ENCODE measurements at regions of chr5 and their contacts with region 1.

Region 1: GRCh38 chr5:71905834-71906711 is 187.0 kb downstream of the CARTPT start:
- DNase-seq: no peak
- ATAC-seq: no peak
- H3K4me3 ChIP-seq: no peak overlapping the region
- H3K27ac ChIP-seq: no peak overlapping the region
- H3K4me1 ChIP-seq: no peaks in the 10 kb centered on the region
- H3K27me3 ChIP-seq: no peaks in the 10 kb centered on the region
- CTCF ChIP-seq: no peak

Region 2: GRCh38 chr5:71790433-71790832 is 115.6 kb before region 1 on chr5:
- intact Hi-C with region 1: no loop called
- DNase-seq: no peak
- ATAC-seq: no peak
- H3K4me3 ChIP-seq: no peak overlapping the region
- H3K27ac ChIP-seq: no peak overlapping the region
- H3K4me1 ChIP-seq: no peaks in the 10 kb centered on the region
- H3K27me3 ChIP-seq: no peaks in the 10 kb centered on the region
- CTCF ChIP-seq: no peak

Region 3: DNA sequence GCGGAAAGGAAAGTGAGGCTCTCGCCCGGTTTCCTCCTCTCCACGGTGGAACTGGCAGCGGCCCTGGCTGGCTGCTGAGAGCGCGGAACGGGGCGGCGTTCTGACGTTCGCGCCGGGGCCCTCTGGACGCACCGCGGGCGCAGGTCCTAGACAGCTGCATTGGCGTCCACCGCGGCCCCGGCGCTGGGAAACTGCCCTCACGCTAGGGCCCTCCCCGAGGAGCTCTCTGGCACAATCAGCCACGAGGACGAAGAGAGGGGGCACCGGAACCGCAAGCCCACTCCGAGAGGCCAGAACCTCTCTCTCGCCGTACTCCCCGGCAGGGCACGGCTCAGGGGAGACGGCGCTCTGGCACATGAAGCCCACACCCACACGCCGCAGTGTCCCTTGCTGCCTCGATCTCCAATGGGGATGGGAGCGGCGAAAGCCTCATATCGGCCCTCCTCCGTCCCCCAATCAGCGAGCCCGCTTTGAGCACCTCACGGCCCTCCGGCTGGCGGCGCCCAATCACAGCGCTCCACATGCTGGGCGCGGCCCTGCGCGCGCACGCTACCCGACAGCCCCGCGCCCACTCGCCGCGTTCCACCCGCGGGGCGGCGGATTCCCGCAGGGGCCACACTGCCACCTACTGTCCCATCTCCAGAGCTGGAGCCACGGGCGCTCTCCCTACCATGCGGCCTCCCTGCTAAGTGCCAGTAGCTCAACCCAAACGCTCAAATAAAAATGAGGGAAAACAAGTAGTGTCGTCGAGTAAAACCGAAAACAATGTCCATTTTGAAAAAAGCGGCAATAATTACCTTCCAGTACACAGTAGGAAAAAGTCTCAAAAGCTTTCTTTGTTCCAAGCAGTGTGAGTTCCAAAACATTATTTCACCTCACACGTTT is 402.1 kb after region 1 on chr5:
- intact Hi-C with region 1: no loop called
- DNase-seq: peak; percentile 97 to 99
- ATAC-seq: peak; percentile 98 to 99 (median 99)
- H3K4me3 ChIP-seq: peak overlapping the region; percentile 85
- H3K27ac ChIP-seq: peak overlapping the region; percentile 97
- H3K4me1 ChIP-seq: peaks cover 7% of the 10 kb centered on the region
- H3K27me3 ChIP-seq: no peaks in the 10 kb centered on the region
- CTCF ChIP-seq: peak; percentile 88

Region 4: GRCh38 chr5:73405691-73406090 is 1499.6 kb after region 1 on chr5:
- intact Hi-C with region 1: loop called in 1 of 2 experiments (anchors 10 kb)
- DNase-seq: no peak
- ATAC-seq: no peak
- H3K4me3 ChIP-seq: no peak overlapping the region
- H3K27ac ChIP-seq: no peak overlapping the region
- H3K4me1 ChIP-seq: no peaks in the 10 kb centered on the region
- H3K27me3 ChIP-seq: peaks cover 0 to 7% (median 4%) of the 10 kb centered on the region in 3 donors
- CTCF ChIP-seq: no peak